ENCODE measurements at regions of chr2 and their contacts with region 1.

Region 1: DNA sequence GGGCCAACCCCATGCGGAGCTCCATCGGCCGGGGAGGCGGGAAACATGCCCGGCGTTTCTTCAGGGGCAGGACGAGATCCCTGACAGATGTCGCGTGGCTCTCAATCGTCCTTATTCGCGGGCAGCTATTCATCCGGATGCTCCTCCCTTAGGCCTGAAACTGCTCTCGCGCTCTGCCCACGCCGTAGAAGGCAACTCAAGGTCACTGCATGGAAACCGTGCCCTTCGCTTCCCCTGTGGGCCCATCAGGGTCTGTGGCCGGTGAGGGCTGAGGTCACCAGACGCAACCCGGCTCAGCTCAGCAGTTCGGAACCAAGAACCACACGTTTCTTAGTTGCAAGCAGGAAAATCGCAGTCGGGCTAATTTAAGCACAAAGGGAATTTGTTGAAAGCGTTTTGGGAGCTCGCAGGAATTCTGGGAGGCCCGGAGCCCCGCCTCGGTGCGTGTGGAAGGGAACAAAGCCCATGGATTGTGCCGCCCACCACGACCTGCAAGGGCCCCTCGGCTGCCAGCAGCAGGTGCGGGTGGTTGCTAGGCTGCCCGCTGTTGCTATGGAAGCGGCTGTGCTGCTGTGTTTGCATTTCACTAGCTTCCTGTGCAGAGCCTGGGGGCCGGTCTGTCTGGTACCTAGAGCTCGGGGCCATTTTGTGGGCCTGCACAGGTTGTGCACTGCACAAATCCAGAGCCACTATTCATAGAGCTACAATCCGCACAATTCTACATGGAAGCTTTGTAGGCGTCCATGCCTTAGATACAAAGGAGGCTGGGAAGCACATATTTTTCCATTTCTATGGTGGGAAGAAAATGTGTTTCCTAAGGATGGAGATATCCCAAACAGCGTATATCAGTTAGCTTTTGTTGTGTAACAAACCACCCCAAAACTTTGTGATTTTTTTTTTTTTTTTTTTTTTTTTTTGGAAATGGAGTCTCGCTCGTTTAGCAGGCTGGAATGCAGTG is 6.0 kb upstream of the ALLC start:
- DNase-seq: no peak
- H3K4me3 ChIP-seq: no peak overlapping the region
- H3K4me3 Mint-ChIP-seq: peak overlapping the region; percentile 60 to 88
- H3K27ac ChIP-seq: no peak overlapping the region
- H3K27ac Mint-ChIP-seq: peak overlapping the region in 2 of 7 donors; percentile 19 to 25
- H3K4me1 ChIP-seq: peaks cover 2 to 10% of the 10 kb centered on the region in 2 donors
- H3K4me1 Mint-ChIP-seq: peaks cover 11% of the 10 kb centered on the region
- H3K27me3 ChIP-seq: peaks cover 0 to 17% of the 10 kb centered on the region in 2 donors
- H3K27me3 Mint-ChIP-seq: peaks cover 10 to 31% (median 23%) of the 10 kb centered on the region in 3 donors
- CTCF ChIP-seq: no peak

Region 2: DNA sequence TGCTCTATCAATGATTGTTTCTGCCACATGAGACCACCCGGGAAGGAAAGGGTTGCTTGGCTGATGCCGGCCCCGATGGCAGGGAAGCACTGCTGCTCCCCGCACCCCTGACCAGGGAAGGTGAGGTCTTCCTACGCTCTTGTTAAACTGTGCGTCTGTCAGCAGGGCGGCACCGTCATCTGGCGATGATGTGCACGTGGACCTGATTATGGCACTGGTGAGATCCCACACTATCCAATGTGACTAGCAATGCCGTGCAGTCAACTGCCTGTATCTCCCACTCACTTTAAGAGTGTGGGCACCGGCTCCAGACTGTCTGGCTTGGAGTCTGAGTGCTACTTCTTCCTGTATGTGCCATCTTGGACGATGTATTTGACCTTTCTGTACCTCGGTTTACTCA is 1530.1 kb before region 1 on chr2:
- intact Hi-C with region 1: loop called in 1 of 2 experiments (anchors 5 kb)
- DNase-seq: no peak
- H3K4me3 ChIP-seq: no peak overlapping the region
- H3K4me3 Mint-ChIP-seq: no peak overlapping the region
- H3K27ac ChIP-seq: no peak overlapping the region
- H3K27ac Mint-ChIP-seq: peak overlapping the region in 1 of 7 donors; percentile 61
- H3K4me1 ChIP-seq: no peaks in the 10 kb centered on the region
- H3K4me1 Mint-ChIP-seq: peaks cover 3% of the 10 kb centered on the region
- H3K27me3 ChIP-seq: no peaks in the 10 kb centered on the region
- H3K27me3 Mint-ChIP-seq: peaks cover 0 to 4% (median 0%) of the 10 kb centered on the region in 3 donors
- CTCF ChIP-seq: no peak